ENCODE measurements at regions of chr5 and their contacts with region 1.

Region 1: GRCh38 chr5:39080597-39081204 is 6.5 kb upstream of the RICTOR start:
- DNase-seq: peak; percentile 50
- H3K4me3 Mint-ChIP-seq: no peak overlapping the region
- H3K27ac Mint-ChIP-seq: no peak overlapping the region
- H3K4me1 Mint-ChIP-seq: peaks cover 24% of the 10 kb centered on the region
- H3K27me3 Mint-ChIP-seq: peaks cover 34% of the 10 kb centered on the region

Region 2: GRCh38 chr5:38795986-38796741 is 284.5 kb before region 1 on chr5:
- CTCF ChIA-PET with region 1: no interaction called
- intact Hi-C with region 1: no loop called
- DNase-seq: no peak
- H3K4me3 Mint-ChIP-seq: no peak overlapping the region
- H3K27ac Mint-ChIP-seq: no peak overlapping the region
- H3K4me1 Mint-ChIP-seq: peaks cover 2% of the 10 kb centered on the region
- H3K27me3 Mint-ChIP-seq: peaks cover 7% of the 10 kb centered on the region

Region 3: DNA sequence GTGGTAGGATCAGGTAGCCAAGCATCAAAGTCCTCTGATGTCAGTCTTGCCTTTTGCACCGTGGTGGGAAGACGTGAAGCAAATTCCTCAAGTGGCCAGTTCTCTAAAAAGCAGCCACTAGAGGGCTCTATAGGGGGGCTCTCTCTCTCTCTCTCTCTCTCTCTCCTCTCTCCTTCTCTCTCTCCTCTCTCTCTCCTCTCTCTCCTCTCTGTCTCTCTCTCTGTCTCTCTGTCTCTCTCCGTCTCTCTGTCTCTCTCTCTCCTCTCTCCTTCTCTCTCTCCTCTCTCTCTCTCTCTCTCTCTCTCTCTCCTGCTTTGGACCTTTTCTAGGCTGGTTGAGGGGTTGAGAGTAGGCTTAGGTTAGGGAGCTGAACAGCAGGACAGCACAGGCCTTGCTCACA is 248.8 kb before region 1 on chr5:
- CTCF ChIA-PET with region 1: no interaction called
- intact Hi-C with region 1: loop called (anchors 1 kb)
- DNase-seq: peak; percentile 21
- H3K4me3 Mint-ChIP-seq: no peak overlapping the region
- H3K27ac Mint-ChIP-seq: no peak overlapping the region
- H3K4me1 Mint-ChIP-seq: no peaks in the 10 kb centered on the region
- H3K27me3 Mint-ChIP-seq: peaks cover 15% of the 10 kb centered on the region

Region 4: GRCh38 chr5:38994324-38994927 is 86.3 kb before region 1 on chr5:
- CTCF ChIA-PET with region 1: interaction called, 6 read pairs
- intact Hi-C with region 1: loop called (anchors 1 kb)
- DNase-seq: peak; percentile 55
- H3K4me3 Mint-ChIP-seq: no peak overlapping the region
- H3K27ac Mint-ChIP-seq: no peak overlapping the region
- H3K4me1 Mint-ChIP-seq: peaks cover 14% of the 10 kb centered on the region
- H3K27me3 Mint-ChIP-seq: no peaks in the 10 kb centered on the region

Region 5: GRCh38 chr5:39005566-39006232 is 75.0 kb before region 1 on chr5:
- CTCF ChIA-PET with region 1: interaction called, 19 read pairs
- intact Hi-C with region 1: loop called (anchors 1 kb)
- DNase-seq: peak; percentile 26
- H3K4me3 Mint-ChIP-seq: no peak overlapping the region
- H3K27ac Mint-ChIP-seq: no peak overlapping the region
- H3K4me1 Mint-ChIP-seq: peaks cover 54% of the 10 kb centered on the region
- H3K27me3 Mint-ChIP-seq: no peaks in the 10 kb centered on the region

Region 6: DNA sequence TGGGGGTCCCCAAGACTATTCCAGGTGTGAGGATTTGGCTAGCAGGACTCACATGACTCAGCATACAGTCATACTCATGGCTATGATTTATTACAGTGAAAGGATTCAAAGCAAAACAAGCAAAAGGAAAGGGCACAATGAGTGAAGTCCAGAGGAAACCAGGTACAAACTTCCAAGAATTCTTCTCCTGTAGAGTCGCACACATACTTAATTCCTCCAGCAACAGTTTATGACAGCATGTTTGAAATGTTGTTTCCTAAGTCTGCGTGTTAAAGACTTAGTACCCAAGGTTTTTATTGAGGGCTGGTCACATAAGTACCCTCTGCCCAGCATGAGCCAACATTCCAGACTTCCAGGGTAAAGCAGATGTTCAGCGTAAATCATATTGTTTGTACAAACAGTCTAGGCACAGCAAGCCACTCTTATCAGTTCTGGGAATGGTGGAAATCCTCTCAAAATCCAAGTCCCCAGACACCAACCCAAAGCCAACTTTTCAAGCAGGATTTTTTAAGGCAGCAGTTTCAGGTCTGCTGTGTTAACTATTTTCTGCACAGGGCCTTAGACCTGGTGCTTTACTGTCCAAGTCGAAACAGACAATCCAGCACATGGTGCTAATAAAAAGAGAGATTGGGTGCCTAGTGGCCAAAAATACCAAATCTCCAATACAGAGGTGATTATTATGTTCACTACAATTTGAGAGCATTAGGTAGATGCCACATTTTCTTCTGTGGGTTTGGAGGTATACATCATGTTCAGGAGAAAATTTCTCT is 12.1 kb after region 1 on chr5:
- CTCF ChIA-PET with region 1: interaction called, 15 read pairs
- intact Hi-C with region 1: no loop called
- DNase-seq: no peak
- H3K4me3 Mint-ChIP-seq: no peak overlapping the region
- H3K27ac Mint-ChIP-seq: no peak overlapping the region
- H3K4me1 Mint-ChIP-seq: peaks cover 4% of the 10 kb centered on the region
- H3K27me3 Mint-ChIP-seq: peaks cover 1% of the 10 kb centered on the region

Measured in activated naive CD4-positive, alpha-beta T cell treated with anti-CD3 and anti-CD28 coated beads for 36 hours (primary cell).